ENCODE measurements at regions of chr20 and their contacts with region 1.

Region 1: GRCh38 chr20:42530822-42531448 is 658.8 kb downstream of the PTPRT start:
- DNase-seq: no peak
- ATAC-seq: peak; percentile 51

Region 2: DNA sequence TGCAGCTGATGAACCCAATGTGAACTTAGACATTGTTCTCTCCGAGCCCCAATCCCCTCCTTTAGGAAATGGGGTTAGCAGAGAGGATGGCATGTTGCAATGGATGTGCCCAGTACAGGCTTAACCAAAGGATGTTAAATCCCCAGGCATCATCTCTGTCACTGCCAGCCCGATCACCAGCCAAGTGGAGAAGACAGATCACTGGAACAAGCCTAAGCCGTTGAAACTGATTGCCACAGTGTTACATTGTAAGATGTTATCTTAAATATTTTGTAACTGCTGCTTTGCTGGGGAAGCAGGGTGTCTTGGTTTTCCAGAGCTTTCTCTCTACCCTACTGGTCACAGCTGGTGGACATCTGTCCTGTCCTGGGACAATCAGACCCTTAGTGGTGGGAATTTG is 129.3 kb before region 1 on chr20:
- intact Hi-C with region 1: no loop called
- DNase-seq: no peak
- ATAC-seq: no peak

Region 3: GRCh38 chr20:42567409-42567808 is 36.5 kb after region 1 on chr20:
- intact Hi-C with region 1: no loop called
- DNase-seq: no peak
- ATAC-seq: no peak

Region 4: DNA sequence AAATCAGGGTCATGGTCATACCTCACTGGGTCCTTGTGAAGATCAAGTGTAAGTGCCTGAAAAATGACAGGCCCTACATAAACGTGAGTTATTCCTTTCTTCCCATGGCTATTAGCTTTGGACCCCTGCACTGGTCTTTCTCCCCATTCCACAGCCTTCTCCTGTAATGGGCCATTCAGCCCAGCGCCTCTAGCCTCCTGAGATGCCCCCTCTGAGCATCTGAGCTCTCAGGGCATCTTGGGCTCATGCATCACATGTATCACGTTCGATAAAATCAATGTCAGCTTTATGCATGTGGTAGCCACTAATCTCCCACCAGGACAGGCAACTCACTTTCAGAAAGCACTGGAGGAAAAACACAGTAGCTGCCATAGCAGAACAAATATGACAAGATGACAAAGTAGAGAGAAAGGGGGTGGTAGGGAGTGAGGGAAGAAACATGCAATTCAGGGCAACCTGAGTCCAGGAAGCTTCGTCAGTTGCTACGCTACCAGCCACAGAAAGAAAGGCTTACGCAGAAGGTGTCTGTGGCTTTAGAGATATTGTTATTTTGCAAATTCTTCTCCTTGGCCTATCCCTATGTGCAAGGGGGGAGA is 160.0 kb after region 1 on chr20:
- intact Hi-C with region 1: no loop called
- DNase-seq: no peak
- ATAC-seq: no peak

Region 5: DNA sequence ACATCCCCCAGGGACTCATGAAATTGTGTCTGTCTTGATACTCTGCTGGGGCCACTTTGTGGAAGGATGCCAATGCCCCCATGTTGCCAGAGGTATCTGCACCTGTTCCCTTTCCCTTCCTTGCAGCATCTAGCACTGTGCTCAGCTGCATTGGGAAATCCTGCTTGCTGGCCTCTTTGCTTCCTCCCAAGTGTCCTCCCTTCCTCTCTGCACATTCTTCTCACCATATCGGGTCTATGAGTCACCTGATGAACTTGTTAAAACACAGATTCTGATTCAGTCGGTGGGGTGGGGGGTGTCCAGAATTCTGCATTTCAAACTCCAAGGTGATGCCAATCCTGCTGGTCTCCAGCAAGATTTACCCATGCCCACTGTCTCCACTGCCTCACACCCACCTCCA is 191.0 kb after region 1 on chr20:
- intact Hi-C with region 1: no loop called
- DNase-seq: no peak
- ATAC-seq: no peak

Region 6: GRCh38 chr20:43955062-43955749 is 1424.3 kb after region 1 on chr20:
- intact Hi-C with region 1: loop called (anchors 10 kb)
- DNase-seq: no peak
- ATAC-seq: peak; percentile 78

Measured in sciatic nerve (tissue), 2 donors.